ENCODE measurements at regions of chrX and their contacts with region 1.

Region 1: GRCh38 chrX:117645639-117646038 is 471.0 kb downstream of the KLHL13 start:
- DNase-seq: no peak
- ATAC-seq: no peak
- H3K4me3 ChIP-seq: no peak overlapping the region
- H3K4me3 Mint-ChIP-seq: no peak overlapping the region
- H3K27ac ChIP-seq: no peak overlapping the region
- H3K27ac Mint-ChIP-seq: no peak overlapping the region
- H3K4me1 ChIP-seq: no peaks in the 10 kb centered on the region
- H3K4me1 Mint-ChIP-seq: no peaks in the 10 kb centered on the region
- H3K27me3 ChIP-seq: no peaks in the 10 kb centered on the region
- H3K27me3 Mint-ChIP-seq: no peaks in the 10 kb centered on the region

Region 2: GRCh38 chrX:117711782-117712181 is 66.1 kb after region 1 on chrX:
- CTCF ChIA-PET with region 1: no interaction called
- POLR2A ChIA-PET with region 1: no interaction called
- intact Hi-C with region 1: loop called in 1 of 2 experiments (anchors 2 kb)
- DNase-seq: no peak
- ATAC-seq: no peak
- H3K4me3 ChIP-seq: no peak overlapping the region
- H3K4me3 Mint-ChIP-seq: no peak overlapping the region
- H3K27ac ChIP-seq: no peak overlapping the region
- H3K27ac Mint-ChIP-seq: no peak overlapping the region
- H3K4me1 ChIP-seq: no peaks in the 10 kb centered on the region
- H3K4me1 Mint-ChIP-seq: no peaks in the 10 kb centered on the region
- H3K27me3 ChIP-seq: no peaks in the 10 kb centered on the region
- H3K27me3 Mint-ChIP-seq: no peaks in the 10 kb centered on the region

Region 3: GRCh38 chrX:117910216-117910615 is 264.6 kb after region 1 on chrX:
- CTCF ChIA-PET with region 1: no interaction called
- POLR2A ChIA-PET with region 1: no interaction called
- intact Hi-C with region 1: no loop called
- DNase-seq: no peak
- ATAC-seq: no peak
- H3K4me3 ChIP-seq: no peak overlapping the region
- H3K4me3 Mint-ChIP-seq: no peak overlapping the region
- H3K27ac ChIP-seq: no peak overlapping the region
- H3K27ac Mint-ChIP-seq: no peak overlapping the region
- H3K4me1 ChIP-seq: no peaks in the 10 kb centered on the region
- H3K4me1 Mint-ChIP-seq: no peaks in the 10 kb centered on the region
- H3K27me3 ChIP-seq: no peaks in the 10 kb centered on the region
- H3K27me3 Mint-ChIP-seq: no peaks in the 10 kb centered on the region